Astrocyte of the cerebellum (primary cell): ENCODE measurements at regions of chr1 and their contacts with region 1.

Region 1: DNA sequence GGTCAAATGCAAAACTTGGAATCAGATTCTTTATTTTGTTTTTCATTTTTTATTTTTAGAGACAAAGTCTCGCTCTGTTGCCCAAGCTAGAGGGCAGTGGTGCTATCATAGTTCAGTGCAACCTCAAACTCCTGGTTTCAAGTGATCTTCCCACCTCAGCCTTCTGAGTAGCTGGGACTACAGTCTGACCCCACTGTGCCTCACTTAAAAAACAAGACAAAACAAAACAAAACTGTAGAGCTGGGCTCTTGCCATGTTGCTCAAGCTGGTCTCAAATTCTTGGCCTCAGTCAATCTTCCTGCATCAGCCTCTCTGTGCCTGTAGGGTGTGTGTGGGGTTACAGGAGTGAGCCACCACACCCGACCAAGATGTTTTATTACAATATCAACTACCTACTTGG is 396.0 kb upstream of the USP24 start:
- DNase-seq: no peak
- H3K4me3 ChIP-seq: no peak overlapping the region
- CTCF ChIP-seq: no peak

Region 2: GRCh38 chr1:55696181-55696754 is 85.1 kb after region 1 on chr1:
- in situ Hi-C with region 1: loop called (anchors 5 kb)
- DNase-seq: peak; percentile 40
- H3K4me3 ChIP-seq: no peak overlapping the region
- CTCF ChIP-seq: no peak